ENCODE measurements at regions of chrX and their contacts with region 1.

Region 1: DNA sequence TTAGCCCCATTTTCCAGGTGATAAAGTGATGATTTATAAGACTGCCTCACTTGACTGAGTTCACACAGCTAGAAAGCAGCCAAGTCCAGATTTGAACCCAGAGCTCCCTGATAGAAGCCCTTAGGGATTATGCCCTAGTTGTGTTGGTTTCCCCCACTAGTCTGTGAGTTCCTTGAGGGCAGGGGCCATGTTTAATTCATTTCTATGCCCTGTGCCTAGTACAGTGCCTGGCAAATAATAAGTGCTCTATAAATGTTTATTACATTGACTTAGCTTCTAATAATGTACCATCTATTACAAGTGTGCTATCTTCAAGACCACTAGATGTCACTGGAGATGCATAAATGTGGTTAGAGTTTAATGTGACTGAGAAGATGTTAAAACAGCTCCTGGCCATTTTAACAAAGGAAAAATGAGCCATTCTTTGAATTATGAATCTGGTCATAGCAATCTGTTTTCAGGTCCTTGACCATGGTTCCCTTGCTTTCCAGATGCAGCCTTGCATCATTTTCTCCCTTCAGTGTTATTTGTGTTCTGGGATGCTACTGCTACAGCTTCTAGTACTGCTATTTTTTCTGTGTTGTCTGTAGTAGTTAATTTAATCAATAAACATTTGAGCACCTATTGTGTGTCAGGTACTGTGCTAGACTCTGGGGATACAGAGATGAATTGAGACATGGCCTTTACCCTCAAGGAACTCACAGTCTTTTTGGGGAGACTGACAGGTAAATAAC is 43.2 kb downstream of the SLC9A6 start:
- DNase-seq: peak; percentile 22
- ATAC-seq: peak; percentile 94
- H3K4me3 ChIP-seq: no peak overlapping the region
- H3K27ac ChIP-seq: no peak overlapping the region
- H3K4me1 ChIP-seq: no peaks in the 10 kb centered on the region
- H3K27me3 ChIP-seq: no peaks in the 10 kb centered on the region
- CTCF ChIP-seq: peak; percentile 67

Region 2: GRCh38 chrX:135295944-135296305 is 732.5 kb before region 1 on chrX:
- CTCF ChIA-PET with region 1: no interaction called
- POLR2A ChIA-PET with region 1: no interaction called
- in situ Hi-C with region 1: no loop called
- intact Hi-C with region 1: no loop called
- DNase-seq: no peak
- ATAC-seq: no peak
- H3K4me3 ChIP-seq: no peak overlapping the region; a peak in 1 of 4 replicates
- H3K27ac ChIP-seq: no peak overlapping the region
- H3K4me1 ChIP-seq: no peaks in the 10 kb centered on the region
- H3K27me3 ChIP-seq: no peaks in the 10 kb centered on the region
- CTCF ChIP-seq: no peak

Region 3: GRCh38 chrX:136162831-136163570 is 134.6 kb after region 1 on chrX:
- CTCF ChIA-PET with region 1: interaction called, 48 read pairs
- POLR2A ChIA-PET with region 1: no interaction called
- in situ Hi-C with region 1: no loop called
- intact Hi-C with region 1: loop called (anchors 1 kb)
- DNase-seq: peak; percentile 20
- ATAC-seq: peak; percentile 96
- H3K4me3 ChIP-seq: no peak overlapping the region
- H3K27ac ChIP-seq: no peak overlapping the region
- H3K4me1 ChIP-seq: 0 out of 2 replicates have a peak, but pooled peaks cover 3% of the 10 kb centered on the region
- H3K27me3 ChIP-seq: no peaks in the 10 kb centered on the region
- CTCF ChIP-seq: peak; percentile 89

Region 4: DNA sequence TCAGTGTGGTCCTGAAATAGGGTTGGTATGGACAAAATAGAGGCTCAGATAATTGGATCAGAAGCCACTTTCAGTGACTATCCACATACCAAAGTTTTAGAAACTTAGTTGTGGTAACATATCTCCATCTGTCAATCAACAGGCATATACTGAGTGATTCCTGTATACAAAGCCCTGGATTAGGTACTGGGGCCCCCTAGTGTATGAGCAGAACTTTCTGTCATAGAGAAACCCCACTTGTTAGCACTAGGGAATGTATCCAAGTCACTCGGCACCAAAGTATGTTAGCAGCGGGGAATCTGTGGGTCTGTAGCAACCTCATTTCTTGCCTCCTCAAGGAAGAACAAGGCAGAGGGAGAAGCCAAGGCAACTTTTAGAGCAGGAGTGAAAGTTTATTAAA is 172.0 kb after region 1 on chrX:
- CTCF ChIA-PET with region 1: no interaction called
- POLR2A ChIA-PET with region 1: no interaction called
- in situ Hi-C with region 1: no loop called
- intact Hi-C with region 1: loop called (anchors 1 kb)
- DNase-seq: no peak
- ATAC-seq: peak; percentile 95
- H3K4me3 ChIP-seq: no peak overlapping the region
- H3K27ac ChIP-seq: no peak overlapping the region
- H3K4me1 ChIP-seq: no peaks in the 10 kb centered on the region
- H3K27me3 ChIP-seq: no peaks in the 10 kb centered on the region
- CTCF ChIP-seq: peak; percentile 70

Region 5: DNA sequence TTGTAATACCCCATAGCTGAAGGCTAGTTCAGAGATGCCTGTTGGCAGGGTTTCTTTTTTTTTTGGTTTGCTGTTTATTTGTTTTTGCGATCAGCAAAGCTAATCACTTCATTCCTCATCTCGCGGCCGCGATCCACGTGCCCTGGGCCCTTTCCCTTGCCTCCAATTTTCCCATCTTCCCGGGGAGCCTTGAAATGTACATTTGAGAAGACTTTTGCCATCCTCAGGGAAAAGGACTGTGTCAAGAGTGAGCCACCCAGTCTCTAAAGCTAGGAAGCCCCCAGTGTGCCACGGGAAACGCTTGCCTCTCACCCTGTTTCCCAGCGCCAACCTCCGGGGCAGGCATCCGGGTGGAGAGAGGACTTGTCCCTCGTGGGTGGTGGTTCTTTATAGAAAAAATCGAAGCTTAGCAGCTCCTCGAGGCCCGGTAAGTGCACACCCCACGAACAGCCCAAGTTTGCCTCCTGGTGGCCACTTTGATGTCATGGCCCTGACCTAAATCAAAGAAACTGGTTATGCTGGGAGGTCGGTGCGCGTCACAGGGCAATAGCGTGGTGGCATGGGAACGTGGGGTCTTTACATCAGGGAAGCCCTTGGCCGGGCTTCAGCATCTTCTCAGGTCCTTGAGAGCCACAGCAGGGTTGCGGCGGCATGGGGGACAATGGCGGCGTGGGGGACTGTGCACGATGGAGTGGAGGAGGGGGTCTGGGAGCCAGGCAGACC is 180.8 kb after region 1 on chrX:
- CTCF ChIA-PET with region 1: interaction called, 12 read pairs
- POLR2A ChIA-PET with region 1: no interaction called
- in situ Hi-C with region 1: no loop called
- intact Hi-C with region 1: no loop called
- DNase-seq: no peak
- ATAC-seq: peak; percentile 74
- H3K4me3 ChIP-seq: no peak overlapping the region
- H3K27ac ChIP-seq: no peak overlapping the region
- H3K4me1 ChIP-seq: no peaks in the 10 kb centered on the region
- H3K27me3 ChIP-seq: no peaks in the 10 kb centered on the region
- CTCF ChIP-seq: peak; percentile 79

Region 6: GRCh38 chrX:136268051-136269048 is 239.9 kb after region 1 on chrX:
- CTCF ChIA-PET with region 1: no interaction called
- POLR2A ChIA-PET with region 1: no interaction called
- in situ Hi-C with region 1: no loop called
- intact Hi-C with region 1: loop called (anchors 5 kb)
- DNase-seq: no peak
- ATAC-seq: peak; percentile 89
- H3K4me3 ChIP-seq: no peak overlapping the region
- H3K27ac ChIP-seq: no peak overlapping the region; the same call in 1 of the 2 replicates
- H3K4me1 ChIP-seq: no peaks in the 10 kb centered on the region
- H3K27me3 ChIP-seq: peaks cover 5% of the 10 kb centered on the region; the same call in 1 of the 2 replicates
- CTCF ChIP-seq: peak; percentile 86